MCF 10A (cell line): ENCODE measurements at regions of chr1 and their contacts with region 1.

Region 1: DNA sequence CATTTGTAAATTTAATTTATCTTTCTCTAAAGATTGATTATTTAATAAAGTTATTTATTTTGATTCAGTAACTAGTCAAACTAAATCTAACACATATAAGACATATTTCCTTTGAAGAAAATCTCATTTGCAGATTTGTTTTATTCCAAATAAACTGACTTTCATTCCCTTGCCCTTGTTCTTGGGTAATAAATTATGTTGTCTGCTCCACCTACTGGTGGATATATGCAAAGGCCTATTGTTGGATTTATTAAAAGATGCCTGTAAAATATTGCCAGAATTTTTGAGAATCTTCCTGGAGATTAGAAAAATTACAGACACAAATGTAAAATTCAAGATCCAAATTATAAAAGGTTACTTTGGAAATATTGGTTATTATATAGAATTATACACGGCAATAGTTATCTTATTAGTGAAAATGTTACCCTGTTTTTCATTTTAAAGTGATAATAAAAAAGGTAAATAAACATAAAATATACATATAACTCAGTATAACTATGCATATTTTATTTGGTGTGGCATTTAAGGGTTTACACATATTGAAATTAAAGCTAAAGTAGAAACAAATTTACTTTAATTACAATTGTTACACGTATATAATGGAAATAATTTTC is 116.1 kb downstream of the SPATA17 start:
- DNase-seq: peak; percentile 66
- H3K4me3 Mint-ChIP-seq: no peak overlapping the region
- H3K27ac Mint-ChIP-seq: no peak overlapping the region
- H3K4me1 Mint-ChIP-seq: no peaks in the 10 kb centered on the region
- H3K27me3 Mint-ChIP-seq: no peaks in the 10 kb centered on the region
- CTCF ChIP-seq: peak; percentile 93

Region 2: GRCh38 chr1:216310776-216311175 is 1436.5 kb before region 1 on chr1:
- CTCF ChIA-PET with region 1: no interaction called
- POLR2A ChIA-PET with region 1: no interaction called
- intact Hi-C with region 1: loop called (anchors 5 kb)
- DNase-seq: peak; percentile 75
- H3K4me3 Mint-ChIP-seq: no peak overlapping the region
- H3K27ac Mint-ChIP-seq: no peak overlapping the region
- H3K4me1 Mint-ChIP-seq: no peaks in the 10 kb centered on the region
- H3K27me3 Mint-ChIP-seq: peaks cover 77% of the 10 kb centered on the region
- CTCF ChIP-seq: peak; percentile 95

Region 3: DNA sequence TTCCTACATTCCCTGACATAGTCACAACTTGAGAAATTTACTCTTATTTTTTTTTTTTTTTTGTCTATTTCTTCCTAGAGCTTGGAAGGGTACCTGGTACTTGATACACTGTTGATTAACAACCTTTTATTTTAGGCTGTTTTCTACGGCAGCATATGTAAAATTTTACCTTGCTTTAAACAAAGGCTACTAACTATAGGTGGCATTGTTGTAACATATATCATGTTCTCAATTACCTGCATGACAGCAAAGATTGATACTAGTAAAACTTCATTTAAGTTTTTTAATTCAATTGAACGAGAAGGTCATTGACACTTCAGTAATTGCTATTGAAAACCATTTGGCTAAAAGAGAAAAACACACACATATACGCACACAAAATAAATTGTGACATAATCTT is 785.7 kb before region 1 on chr1:
- CTCF ChIA-PET with region 1: interaction called, 4 read pairs
- POLR2A ChIA-PET with region 1: no interaction called
- intact Hi-C with region 1: loop called (anchors 1 kb)
- DNase-seq: no peak
- H3K4me3 Mint-ChIP-seq: no peak overlapping the region
- H3K27ac Mint-ChIP-seq: no peak overlapping the region
- H3K4me1 Mint-ChIP-seq: no peaks in the 10 kb centered on the region
- H3K27me3 Mint-ChIP-seq: no peaks in the 10 kb centered on the region
- CTCF ChIP-seq: peak; percentile 5

Region 4: DNA sequence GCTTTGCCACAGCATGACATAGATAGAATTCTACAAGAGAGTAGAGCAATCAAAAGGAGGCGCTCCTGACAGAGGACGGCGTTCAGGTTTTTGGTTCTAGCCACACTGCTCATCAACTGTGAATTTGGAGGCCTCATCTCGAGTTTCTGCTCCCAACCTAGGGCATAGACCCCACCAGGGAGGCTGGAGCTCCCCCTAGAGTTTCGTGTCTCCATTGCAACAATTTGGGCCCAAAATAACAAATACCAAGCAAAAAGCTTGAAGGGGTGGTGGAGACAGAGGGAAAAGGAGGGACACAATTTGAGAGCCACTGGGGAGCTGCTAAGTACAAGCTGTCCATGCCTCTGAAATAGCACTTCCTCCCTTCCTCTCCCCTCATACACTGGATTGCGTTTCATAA is 413.3 kb before region 1 on chr1:
- CTCF ChIA-PET with region 1: no interaction called
- POLR2A ChIA-PET with region 1: no interaction called
- intact Hi-C with region 1: loop called (anchors 5 kb)
- DNase-seq: peak; percentile 79
- H3K4me3 Mint-ChIP-seq: no peak overlapping the region
- H3K27ac Mint-ChIP-seq: no peak overlapping the region
- H3K4me1 Mint-ChIP-seq: no peaks in the 10 kb centered on the region
- H3K27me3 Mint-ChIP-seq: peaks cover 5% of the 10 kb centered on the region
- CTCF ChIP-seq: peak; percentile 91

Region 5: DNA sequence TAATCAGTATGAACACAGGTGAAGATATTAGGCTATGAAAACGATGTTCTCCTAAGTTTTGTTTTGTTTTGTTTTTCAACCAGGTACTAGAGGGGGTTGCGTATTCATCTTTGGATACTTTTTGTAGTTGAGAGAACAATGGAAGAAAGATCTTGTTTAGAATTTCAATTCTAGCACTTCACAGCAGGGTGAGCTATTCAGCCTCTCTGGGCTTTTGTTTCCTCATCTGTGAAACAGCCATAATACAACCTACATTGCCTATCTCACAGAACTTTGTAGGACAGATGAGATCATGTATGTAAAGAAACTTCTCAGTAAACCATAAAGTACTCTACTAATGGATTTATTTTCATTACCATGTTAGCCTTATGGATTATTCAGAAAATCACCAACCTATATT is 315.9 kb before region 1 on chr1:
- CTCF ChIA-PET with region 1: no interaction called
- POLR2A ChIA-PET with region 1: no interaction called
- intact Hi-C with region 1: loop called (anchors 5 kb)
- DNase-seq: peak; percentile 29
- H3K4me3 Mint-ChIP-seq: no peak overlapping the region
- H3K27ac Mint-ChIP-seq: no peak overlapping the region
- H3K4me1 Mint-ChIP-seq: peaks cover 7% of the 10 kb centered on the region
- H3K27me3 Mint-ChIP-seq: no peaks in the 10 kb centered on the region
- CTCF ChIP-seq: peak; percentile 23

Region 6: GRCh38 chr1:217734973-217735372 is 12.3 kb before region 1 on chr1:
- CTCF ChIA-PET with region 1: interaction called, 15 read pairs
- POLR2A ChIA-PET with region 1: no interaction called
- intact Hi-C with region 1: no loop called
- DNase-seq: peak; percentile 68
- H3K4me3 Mint-ChIP-seq: no peak overlapping the region
- H3K27ac Mint-ChIP-seq: no peak overlapping the region
- H3K4me1 Mint-ChIP-seq: peaks cover 27% of the 10 kb centered on the region
- H3K27me3 Mint-ChIP-seq: no peaks in the 10 kb centered on the region
- CTCF ChIP-seq: no peak

Region 7: GRCh38 chr1:217907504-217907903 is 160.2 kb after region 1 on chr1:
- CTCF ChIA-PET with region 1: no interaction called
- POLR2A ChIA-PET with region 1: no interaction called
- intact Hi-C with region 1: no loop called
- DNase-seq: peak; percentile 98
- H3K4me3 Mint-ChIP-seq: no peak overlapping the region
- H3K27ac Mint-ChIP-seq: no peak overlapping the region
- H3K4me1 Mint-ChIP-seq: no peaks in the 10 kb centered on the region
- H3K27me3 Mint-ChIP-seq: no peaks in the 10 kb centered on the region
- CTCF ChIP-seq: no peak